MCF 10A (cell line): ENCODE measurements at regions of chrX and their contacts with region 1.

Region 1: GRCh38 chrX:40153335-40154249 is 55.8 kb upstream of the BCOR start:
- DNase-seq: peak; percentile 49
- H3K4me3 Mint-ChIP-seq: peak overlapping the region; percentile 62
- H3K27ac Mint-ChIP-seq: no peak overlapping the region
- H3K4me1 Mint-ChIP-seq: no peaks in the 10 kb centered on the region
- H3K27me3 Mint-ChIP-seq: no peaks in the 10 kb centered on the region
- CTCF ChIP-seq: no peak

Region 2: DNA sequence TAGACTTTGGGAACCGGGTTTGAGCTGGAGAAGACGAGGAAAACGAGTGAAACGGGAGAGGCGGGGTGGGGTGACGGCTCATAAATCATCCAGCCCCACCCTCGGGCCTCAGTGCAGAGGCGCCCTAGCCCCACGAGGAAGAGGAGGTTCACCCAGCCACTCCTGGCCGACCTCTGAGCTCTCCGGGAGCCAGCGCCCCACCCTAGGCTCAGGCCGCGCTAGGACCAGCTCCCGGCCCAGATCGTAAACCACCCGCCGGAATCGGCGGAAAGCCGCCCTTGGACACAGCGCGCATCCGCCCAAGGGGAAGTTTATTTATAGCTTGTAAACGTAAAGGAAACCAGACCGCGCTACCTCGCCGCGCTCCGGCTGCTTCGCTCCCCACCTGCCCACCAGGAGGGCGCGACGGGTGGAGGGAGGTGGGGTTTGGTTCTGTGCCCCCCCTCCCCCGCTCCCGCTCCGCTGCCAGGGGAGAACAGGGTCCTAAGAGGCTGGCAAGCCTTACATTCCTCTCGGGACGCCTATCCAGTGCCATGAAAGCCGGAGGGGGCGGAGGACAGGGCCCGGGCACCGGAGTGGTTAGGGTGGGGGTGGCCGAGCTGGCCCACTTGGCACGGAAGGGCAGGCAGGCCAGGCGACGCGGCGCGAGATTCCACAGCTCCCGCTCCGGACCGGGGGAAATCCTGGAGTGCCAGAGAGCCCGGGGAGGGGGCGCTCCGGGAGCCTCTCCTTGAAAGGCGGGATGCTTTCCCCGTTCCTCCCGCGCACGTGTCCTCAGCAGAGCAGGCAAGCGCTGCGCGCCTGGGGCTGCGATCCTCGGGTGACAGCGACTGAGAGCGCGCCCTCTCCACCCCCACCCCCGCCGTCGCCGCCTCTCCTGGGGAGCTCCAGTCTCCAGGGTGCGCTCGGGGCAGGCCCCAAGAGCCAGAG is 140.1 kb before region 1 on chrX:
- CTCF ChIA-PET with region 1: no interaction called
- POLR2A ChIA-PET with region 1: no interaction called
- intact Hi-C with region 1: loop called (anchors 2 kb)
- DNase-seq: peak; percentile 74
- H3K4me3 Mint-ChIP-seq: peak overlapping the region; percentile 79
- H3K27ac Mint-ChIP-seq: peak overlapping the region; percentile 82
- H3K4me1 Mint-ChIP-seq: peaks cover 6% of the 10 kb centered on the region
- H3K27me3 Mint-ChIP-seq: no peaks in the 10 kb centered on the region
- CTCF ChIP-seq: no peak

Region 3: DNA sequence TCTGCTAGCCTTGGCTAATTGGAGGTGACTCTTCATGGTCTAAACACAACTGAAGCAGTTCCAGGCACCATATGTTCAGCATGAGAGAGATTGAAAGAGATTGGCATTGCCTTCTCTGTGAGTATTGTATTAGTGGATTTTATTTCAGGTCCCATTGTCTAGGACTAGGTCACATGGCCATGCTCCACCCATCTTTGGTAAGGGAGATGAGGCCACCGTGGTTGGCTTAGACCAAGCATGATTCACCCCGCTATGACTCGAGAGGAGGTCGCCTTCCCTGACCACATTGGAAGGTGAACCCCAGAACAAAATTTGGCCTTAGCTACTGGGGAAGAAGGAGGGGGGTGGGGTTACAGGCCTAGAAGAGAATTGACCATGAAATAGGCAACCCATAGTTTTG is 54.0 kb after region 1 on chrX:
- CTCF ChIA-PET with region 1: no interaction called
- POLR2A ChIA-PET with region 1: no interaction called
- intact Hi-C with region 1: no loop called
- DNase-seq: peak; percentile 14
- H3K4me3 Mint-ChIP-seq: no peak overlapping the region
- H3K27ac Mint-ChIP-seq: no peak overlapping the region
- H3K4me1 Mint-ChIP-seq: no peaks in the 10 kb centered on the region
- H3K27me3 Mint-ChIP-seq: peaks cover 19% of the 10 kb centered on the region
- CTCF ChIP-seq: no peak